ENCODE measurements at regions of chr3 and their contacts with region 1.

Region 1: DNA sequence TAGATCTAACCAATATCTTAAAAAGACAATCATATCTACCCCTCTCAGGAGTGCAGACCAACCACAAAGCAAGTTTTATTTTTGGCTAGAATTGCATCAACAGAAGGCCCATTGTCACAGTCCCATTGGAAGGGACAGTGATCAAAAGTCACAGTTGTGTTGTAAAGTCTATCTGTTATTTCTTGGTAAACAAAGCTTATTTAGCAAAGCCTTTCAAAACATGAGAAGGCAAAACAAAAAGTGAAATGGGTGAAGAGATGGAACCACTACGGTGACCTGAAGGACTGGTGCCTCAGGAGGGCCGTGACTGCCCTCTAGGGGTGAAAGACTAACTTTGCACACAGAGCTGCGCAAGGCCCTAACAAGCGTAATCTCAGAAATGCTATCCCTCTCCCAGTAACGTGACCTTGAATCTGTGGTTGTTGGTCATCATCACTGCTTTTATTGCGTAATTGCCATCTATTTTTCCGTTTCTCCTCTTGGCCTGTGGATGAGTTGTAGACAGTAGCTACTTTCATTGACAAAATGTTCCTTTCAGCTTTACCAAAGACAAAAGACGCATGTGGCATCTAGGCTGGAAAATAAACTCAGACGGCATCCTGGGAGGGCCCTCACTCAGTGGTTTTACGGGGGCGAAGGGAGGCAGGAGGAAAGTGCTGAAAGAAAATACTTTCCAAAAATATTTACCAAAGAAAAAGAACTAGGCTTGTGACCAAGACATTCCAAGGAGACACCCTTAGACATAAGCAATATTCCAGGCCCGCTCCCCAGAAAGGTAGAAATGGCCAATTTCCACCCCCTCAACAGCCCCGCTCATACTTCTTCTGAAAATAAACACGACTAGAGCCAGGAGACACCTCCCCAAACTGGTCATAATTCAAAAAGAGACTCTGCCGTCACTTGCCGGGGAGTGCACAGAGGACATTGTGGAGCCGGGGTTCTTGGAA is 79.4 kb downstream of the FRMD4B start:
- DNase-seq: peak; percentile 81
- H3K4me3 Mint-ChIP-seq: no peak overlapping the region
- H3K27ac Mint-ChIP-seq: no peak overlapping the region
- H3K4me1 Mint-ChIP-seq: peaks cover 23% of the 10 kb centered on the region
- H3K27me3 Mint-ChIP-seq: peaks cover 3% of the 10 kb centered on the region

Region 2: GRCh38 chr3:69120879-69121464 is 185.5 kb before region 1 on chr3:
- CTCF ChIA-PET with region 1: interaction called, 71 read pairs
- POLR2A ChIA-PET with region 1: interaction called, 3 read pairs
- intact Hi-C with region 1: loop called (anchors 1 kb)
- DNase-seq: peak; percentile 88
- H3K4me3 Mint-ChIP-seq: no peak overlapping the region
- H3K27ac Mint-ChIP-seq: no peak overlapping the region
- H3K4me1 Mint-ChIP-seq: peaks cover 5% of the 10 kb centered on the region
- H3K27me3 Mint-ChIP-seq: no peaks in the 10 kb centered on the region

Region 3: GRCh38 chr3:69174871-69175737 is 131.4 kb before region 1 on chr3:
- CTCF ChIA-PET with region 1: interaction called, 24 read pairs
- POLR2A ChIA-PET with region 1: no interaction called
- intact Hi-C with region 1: no loop called
- DNase-seq: no peak
- H3K4me3 Mint-ChIP-seq: no peak overlapping the region
- H3K27ac Mint-ChIP-seq: no peak overlapping the region
- H3K4me1 Mint-ChIP-seq: peaks cover 33% of the 10 kb centered on the region
- H3K27me3 Mint-ChIP-seq: no peaks in the 10 kb centered on the region

Region 4: GRCh38 chr3:69194431-69195165 is 111.9 kb before region 1 on chr3:
- CTCF ChIA-PET with region 1: interaction called, 70 read pairs
- POLR2A ChIA-PET with region 1: interaction called, 7 read pairs
- intact Hi-C with region 1: loop called (anchors 1 kb)
- DNase-seq: no peak
- H3K4me3 Mint-ChIP-seq: no peak overlapping the region
- H3K27ac Mint-ChIP-seq: no peak overlapping the region
- H3K4me1 Mint-ChIP-seq: peaks cover 57% of the 10 kb centered on the region
- H3K27me3 Mint-ChIP-seq: no peaks in the 10 kb centered on the region

Region 5: DNA sequence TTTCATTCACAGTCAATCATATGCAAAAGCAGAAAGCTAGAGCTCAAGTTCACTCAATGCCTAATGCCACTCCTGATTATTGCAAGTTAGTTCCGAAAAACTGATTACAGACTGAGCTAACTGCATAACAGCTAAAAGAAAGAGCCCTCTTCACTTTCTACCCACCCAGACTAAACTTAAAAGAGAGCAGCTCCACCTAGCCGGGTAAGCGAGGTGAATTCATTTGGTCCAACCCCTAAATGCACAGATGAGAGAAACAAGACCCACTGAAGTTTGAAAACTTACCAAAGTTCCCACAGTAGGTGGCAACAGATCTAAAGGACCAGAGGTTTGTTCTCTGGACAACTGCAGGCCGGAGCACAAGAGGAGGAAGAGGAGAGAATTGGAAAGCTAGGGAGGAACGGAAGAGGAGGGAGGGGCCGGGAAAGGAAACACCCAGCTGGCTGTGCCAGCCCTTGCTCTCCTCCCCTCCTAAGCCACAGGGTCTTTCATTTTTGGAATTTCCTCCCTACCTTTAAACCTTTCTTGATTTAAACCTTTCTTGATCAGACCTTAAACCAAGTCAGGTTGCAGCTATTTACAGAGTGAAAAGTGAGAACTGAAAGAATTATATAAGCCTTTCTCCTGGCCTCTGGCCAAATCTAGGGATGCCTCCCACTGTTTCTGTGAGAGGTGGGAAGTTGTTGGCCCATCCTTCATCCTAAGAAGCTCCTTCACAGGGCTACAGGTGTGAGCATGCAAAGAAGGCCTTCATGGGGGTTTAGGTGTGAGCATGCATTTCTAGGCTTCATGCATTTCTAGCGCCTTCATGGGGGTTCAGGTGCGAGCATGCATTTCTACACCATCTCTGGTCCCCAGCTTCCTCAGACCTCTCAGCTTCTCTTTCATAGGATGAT is 69.5 kb before region 1 on chr3:
- CTCF ChIA-PET with region 1: interaction called, 10 read pairs
- POLR2A ChIA-PET with region 1: no interaction called
- intact Hi-C with region 1: no loop called
- DNase-seq: no peak
- H3K4me3 Mint-ChIP-seq: peak overlapping the region; percentile 64
- H3K27ac Mint-ChIP-seq: peak overlapping the region; percentile 20
- H3K4me1 Mint-ChIP-seq: peaks cover 17% of the 10 kb centered on the region
- H3K27me3 Mint-ChIP-seq: no peaks in the 10 kb centered on the region

Region 6: GRCh38 chr3:69294014-69294775 is 12.3 kb before region 1 on chr3:
- CTCF ChIA-PET with region 1: interaction called, 57 read pairs
- POLR2A ChIA-PET with region 1: interaction called, 11 read pairs
- intact Hi-C with region 1: no loop called
- DNase-seq: no peak
- H3K4me3 Mint-ChIP-seq: no peak overlapping the region
- H3K27ac Mint-ChIP-seq: no peak overlapping the region
- H3K4me1 Mint-ChIP-seq: peaks cover 11% of the 10 kb centered on the region
- H3K27me3 Mint-ChIP-seq: no peaks in the 10 kb centered on the region

Region 7: DNA sequence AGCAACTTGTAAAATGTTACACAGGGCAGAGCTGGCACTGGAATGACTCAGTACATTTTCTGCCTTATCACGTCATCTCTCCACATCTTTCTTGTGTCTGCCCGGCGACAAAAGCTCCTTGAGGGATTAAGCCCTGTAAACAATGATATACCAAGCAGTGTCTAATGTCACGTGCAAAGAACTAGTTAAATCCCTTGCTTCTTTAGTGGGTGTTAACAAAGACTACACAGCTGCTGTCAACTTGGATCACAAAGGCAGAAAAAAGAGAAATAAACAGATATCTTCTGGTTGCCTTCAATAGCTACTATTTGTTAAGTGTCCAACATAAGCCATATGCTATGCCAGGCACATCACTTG is 127.4 kb after region 1 on chr3:
- CTCF ChIA-PET with region 1: no interaction called
- POLR2A ChIA-PET with region 1: no interaction called
- intact Hi-C with region 1: loop called (anchors 1 kb)
- DNase-seq: peak; percentile 38
- H3K4me3 Mint-ChIP-seq: no peak overlapping the region
- H3K27ac Mint-ChIP-seq: peak overlapping the region; percentile 66
- H3K4me1 Mint-ChIP-seq: peaks cover 47% of the 10 kb centered on the region
- H3K27me3 Mint-ChIP-seq: peaks cover 26% of the 10 kb centered on the region